IMR-90 (cell line): ENCODE measurements at regions of chr6 and their contacts with region 1.

Region 1: GRCh38 chr6:88780714-88781389 is 182.6 kb downstream of the RNGTT start:
- DNase-seq: peak; percentile 70
- ATAC-seq: peak; percentile 84
- H3K4me3 ChIP-seq: no peak overlapping the region
- H3K27ac ChIP-seq: no peak overlapping the region
- H3K4me1 ChIP-seq: no peaks in the 10 kb centered on the region; the same call in 1 of the 2 replicates
- H3K27me3 ChIP-seq: no peaks in the 10 kb centered on the region
- CTCF ChIP-seq: peak; percentile 82
- POLR2A ChIP-seq: no peak
- RAD21 ChIP-seq: peak; percentile 84

Region 2: GRCh38 chr6:87832025-87832825 is 948.6 kb before region 1 on chr6:
- CTCF ChIA-PET with region 1: no interaction called
- POLR2A ChIA-PET with region 1: no interaction called
- dilution Hi-C with region 1: no loop called
- in situ Hi-C with region 1: no loop called
- intact Hi-C with region 1: loop called (anchors 10 kb)
- DNase-seq: peak; percentile 30
- ATAC-seq: peak; percentile 84
- H3K4me3 ChIP-seq: peak overlapping the region; percentile 61
- H3K27ac ChIP-seq: no peak overlapping the region
- H3K4me1 ChIP-seq: no peaks in the 10 kb centered on the region
- H3K27me3 ChIP-seq: no peaks in the 10 kb centered on the region
- CTCF ChIP-seq: peak; percentile 49
- POLR2A ChIP-seq: no peak
- RAD21 ChIP-seq: peak; percentile 26; the same call in 1 of the 2 replicates

Region 3: GRCh38 chr6:87929843-87930288 is 851.0 kb before region 1 on chr6:
- CTCF ChIA-PET with region 1: no interaction called
- POLR2A ChIA-PET with region 1: no interaction called
- dilution Hi-C with region 1: no loop called
- in situ Hi-C with region 1: loop called (anchors 25 kb)
- intact Hi-C with region 1: loop called (anchors 1 kb)
- DNase-seq: peak; percentile 79
- ATAC-seq: peak; percentile 99
- H3K4me3 ChIP-seq: no peak overlapping the region
- H3K27ac ChIP-seq: no peak overlapping the region
- H3K4me1 ChIP-seq: no peaks in the 10 kb centered on the region
- H3K27me3 ChIP-seq: peaks cover 10% of the 10 kb centered on the region
- CTCF ChIP-seq: peak; percentile 79
- POLR2A ChIP-seq: no peak
- RAD21 ChIP-seq: peak; percentile 78

Region 4: GRCh38 chr6:88165844-88166492 is 614.9 kb before region 1 on chr6 and contains the start of gene CNR1:
- CTCF ChIA-PET with region 1: no interaction called
- POLR2A ChIA-PET with region 1: no interaction called
- dilution Hi-C with region 1: no loop called
- in situ Hi-C with region 1: no loop called
- intact Hi-C with region 1: loop called (anchors 5 kb)
- DNase-seq: no peak
- ATAC-seq: peak; percentile 83
- H3K4me3 ChIP-seq: peak within 1 kb of the TSS; percentile 29
- H3K27ac ChIP-seq: no peak within 1 kb of the TSS
- H3K4me1 ChIP-seq: peaks cover 2% of the 10 kb centered on the region; the same call in 1 of the 2 replicates
- H3K27me3 ChIP-seq: peaks cover 46% of the 10 kb centered on the region
- CTCF ChIP-seq: no peak
- POLR2A ChIP-seq: no peak
- RAD21 ChIP-seq: no peak
- total RNA-seq, gene CNR1: not detected in 2 replicates